ENCODE measurements at regions of chr2 and their contacts with region 1.

Region 1: GRCh38 chr2:166375736-166376487 is at the start of gene SCN9A:
- DNase-seq: peak; percentile 72
- ATAC-seq: peak; percentile 93
- H3K4me3 ChIP-seq: peak within 1 kb of the TSS; percentile 77
- H3K27ac ChIP-seq: peak within 1 kb of the TSS; percentile 68
- H3K4me1 ChIP-seq: peaks cover 7% of the 10 kb centered on the region
- H3K27me3 ChIP-seq: no peaks in the 10 kb centered on the region
- CTCF ChIP-seq: no peak
- POLR2A ChIP-seq: no peak; the same call in 1 of the 2 replicates
- RAD21 ChIP-seq: no peak
- total RNA-seq, gene SCN9A: 135 and 179 TPM in 2 replicates

Region 2: DNA sequence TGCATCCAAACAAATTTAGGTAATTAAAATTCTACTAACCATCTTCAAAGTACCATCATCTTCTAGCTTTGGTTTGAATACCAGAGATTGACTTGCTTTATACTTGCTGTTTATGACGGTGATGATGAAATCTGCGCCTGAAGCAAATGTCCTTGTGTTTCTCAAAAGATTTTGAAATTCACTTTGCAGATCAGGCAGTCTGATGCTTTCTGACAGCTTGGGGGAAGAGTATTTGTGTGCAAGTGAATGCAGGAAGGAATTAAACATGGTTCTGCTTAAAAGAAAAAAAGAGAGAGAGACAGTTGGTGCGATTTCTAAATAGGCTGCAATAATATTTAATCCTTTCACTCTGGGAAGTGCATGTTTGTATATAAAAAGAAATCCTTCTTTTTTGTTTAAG is 876.8 kb before region 1 on chr2:
- CTCF ChIA-PET with region 1: no interaction called
- POLR2A ChIA-PET with region 1: no interaction called
- dilution Hi-C with region 1: no loop called
- in situ Hi-C with region 1: no loop called
- intact Hi-C with region 1: no loop called
- DNase-seq: no peak
- ATAC-seq: no peak
- H3K4me3 ChIP-seq: no peak overlapping the region
- H3K27ac ChIP-seq: no peak overlapping the region
- H3K4me1 ChIP-seq: no peaks in the 10 kb centered on the region
- H3K27me3 ChIP-seq: no peaks in the 10 kb centered on the region
- CTCF ChIP-seq: no peak
- POLR2A ChIP-seq: no peak
- RAD21 ChIP-seq: no peak

Region 3: GRCh38 chr2:166293984-166294383 is 81.9 kb before region 1 on chr2:
- CTCF ChIA-PET with region 1: no interaction called
- POLR2A ChIA-PET with region 1: no interaction called
- dilution Hi-C with region 1: no loop called
- in situ Hi-C with region 1: no loop called
- intact Hi-C with region 1: loop called (anchors 5 kb)
- DNase-seq: peak; percentile 41
- ATAC-seq: peak; percentile 57
- H3K4me3 ChIP-seq: no peak overlapping the region
- H3K27ac ChIP-seq: no peak overlapping the region
- H3K4me1 ChIP-seq: no peaks in the 10 kb centered on the region
- H3K27me3 ChIP-seq: no peaks in the 10 kb centered on the region
- CTCF ChIP-seq: no peak
- POLR2A ChIP-seq: no peak
- RAD21 ChIP-seq: no peak

Region 4: DNA sequence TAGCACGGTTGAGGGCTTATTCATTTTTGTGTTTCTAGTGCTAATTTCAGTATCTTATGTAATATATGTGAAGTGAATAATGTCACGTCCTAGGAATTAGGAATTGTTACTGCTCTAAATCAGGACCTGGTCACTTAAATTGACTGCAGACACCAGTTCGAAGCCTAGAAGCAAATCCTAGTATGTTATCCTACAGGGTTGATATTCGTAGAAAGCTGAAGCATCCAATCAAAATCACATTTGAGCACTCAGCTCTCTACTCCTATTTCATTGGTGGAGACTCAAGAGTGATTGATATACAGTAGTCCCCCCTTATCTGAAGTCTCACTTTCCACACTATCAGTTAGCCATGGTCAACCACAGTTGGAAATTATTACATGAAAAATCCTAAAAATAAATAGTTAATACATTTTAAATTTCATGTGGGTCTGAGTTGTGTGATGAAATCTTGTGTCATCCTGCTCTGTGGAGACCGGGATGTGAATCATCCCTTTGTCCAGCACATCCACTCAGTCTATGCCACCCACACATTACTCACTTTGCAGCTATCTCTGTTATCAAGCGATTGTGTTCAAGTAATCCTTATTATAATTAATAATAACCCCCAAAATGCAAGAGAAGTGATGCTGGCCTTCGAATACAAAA is 35.0 kb after region 1 on chr2:
- CTCF ChIA-PET with region 1: no interaction called
- POLR2A ChIA-PET with region 1: no interaction called
- dilution Hi-C with region 1: no loop called
- in situ Hi-C with region 1: no loop called
- intact Hi-C with region 1: loop called (anchors 5 kb)
- DNase-seq: peak; percentile 96
- ATAC-seq: peak; percentile 95
- H3K4me3 ChIP-seq: peak overlapping the region; percentile 4; the same call in 1 of the 2 replicates
- H3K27ac ChIP-seq: no peak overlapping the region
- H3K4me1 ChIP-seq: peaks cover 4% of the 10 kb centered on the region
- H3K27me3 ChIP-seq: no peaks in the 10 kb centered on the region
- CTCF ChIP-seq: no peak
- POLR2A ChIP-seq: no peak
- RAD21 ChIP-seq: no peak